ENCODE measurements at regions of chrX and their contacts with region 1.

Region 1: DNA sequence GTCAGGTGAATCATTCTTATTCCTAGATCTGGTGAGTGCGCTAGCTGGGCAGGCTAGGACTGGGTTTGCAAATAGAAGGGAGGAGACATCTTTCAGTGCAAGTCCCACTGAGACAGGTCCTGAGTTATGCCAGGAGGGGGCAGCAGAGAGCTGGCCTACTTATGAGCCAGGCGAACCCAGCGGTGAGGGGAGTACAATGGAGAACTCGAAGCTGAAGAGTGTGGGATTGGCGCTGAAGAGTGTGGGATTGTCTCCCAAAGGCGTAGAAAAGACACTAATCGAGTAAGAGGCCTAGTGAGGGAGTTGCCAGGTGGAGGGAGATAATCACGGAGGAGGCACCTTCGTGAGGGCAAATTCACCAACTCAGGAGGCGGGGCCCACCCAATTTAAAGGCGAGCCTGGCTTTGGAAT is 91.7 kb upstream of the CXorf66 start:
- DNase-seq: peak; percentile 76 to 90 (median 83)
- H3K4me3 ChIP-seq: no peak overlapping the region
- H3K27ac ChIP-seq: no peak overlapping the region
- H3K4me1 ChIP-seq: no peaks in the 10 kb centered on the region
- H3K27me3 ChIP-seq: no peaks in the 10 kb centered on the region
- CTCF ChIP-seq: peak; percentile 73 to 90 (median 80)
- POLR2A ChIP-seq: no peak

Region 2: GRCh38 chrX:140141444-140142029 is 84.5 kb after region 1 on chrX:
- intact Hi-C with region 1: loop called (anchors 5 kb)
- DNase-seq: peak; percentile 19 to 68 (median 45)
- H3K4me3 ChIP-seq: no peak overlapping the region
- H3K27ac ChIP-seq: no peak overlapping the region
- H3K4me1 ChIP-seq: no peaks in the 10 kb centered on the region
- H3K27me3 ChIP-seq: peaks cover 7% of the 10 kb centered on the region
- CTCF ChIP-seq: peak; percentile 61 to 75 (median 63)
- POLR2A ChIP-seq: no peak

Region 3: DNA sequence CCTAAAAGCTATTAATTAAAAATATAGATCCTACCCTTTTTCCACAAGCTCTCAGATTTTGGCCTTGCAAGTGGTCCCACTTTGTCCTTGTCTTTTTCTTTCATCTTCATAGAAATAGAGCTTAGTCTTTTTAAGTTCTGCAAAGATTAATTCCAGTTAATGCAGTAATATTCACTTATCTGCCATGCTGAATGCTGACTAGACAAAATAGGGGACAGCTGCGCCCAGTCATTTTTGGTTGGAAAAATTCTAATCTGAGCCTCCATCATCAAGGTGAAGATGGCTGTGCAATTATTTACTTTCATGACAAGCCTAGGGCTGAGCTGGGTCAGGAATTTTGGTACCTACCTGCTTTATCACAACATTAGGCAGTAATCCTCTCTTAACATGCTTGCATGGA is 149.7 kb after region 1 on chrX:
- intact Hi-C with region 1: no loop called
- DNase-seq: no peak
- H3K4me3 ChIP-seq: no peak overlapping the region
- H3K27ac ChIP-seq: no peak overlapping the region
- H3K4me1 ChIP-seq: no peaks in the 10 kb centered on the region
- H3K27me3 ChIP-seq: no peaks in the 10 kb centered on the region
- CTCF ChIP-seq: no peak
- POLR2A ChIP-seq: no peak

Region 4: DNA sequence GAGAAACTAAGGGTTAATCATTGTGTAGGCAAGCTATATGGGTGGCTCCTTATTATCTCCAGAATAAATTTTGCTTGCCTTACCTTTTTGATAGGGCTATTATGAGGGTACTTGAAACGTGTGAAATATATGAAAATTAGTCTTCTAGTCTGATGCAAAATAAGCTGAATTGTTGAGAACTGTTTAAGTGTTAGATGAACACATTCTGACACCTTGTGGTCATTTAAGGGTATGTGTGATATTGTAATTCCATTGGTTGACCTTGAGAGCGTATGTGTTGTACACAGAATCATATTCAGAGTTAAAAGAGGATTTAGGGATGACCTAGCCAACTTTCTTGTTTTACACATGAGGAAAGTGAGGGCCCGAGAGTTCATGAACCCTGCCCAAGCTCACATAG is 607.9 kb after region 1 on chrX:
- intact Hi-C with region 1: loop called in 1 of 2 experiments (anchors 10 kb)
- DNase-seq: no peak
- H3K4me3 ChIP-seq: no peak overlapping the region
- H3K27ac ChIP-seq: no peak overlapping the region
- H3K4me1 ChIP-seq: no peaks in the 10 kb centered on the region
- H3K27me3 ChIP-seq: peaks cover 12% of the 10 kb centered on the region
- CTCF ChIP-seq: peak in 5 of 6 experiments; percentile 24 to 42 (median 27)
- POLR2A ChIP-seq: no peak

Measured in adrenal gland (tissue), 19 donors.